Pancreas (tissue), 10 donors: ENCODE measurements at regions of chr3 and their contacts with region 1.

Region 1: DNA sequence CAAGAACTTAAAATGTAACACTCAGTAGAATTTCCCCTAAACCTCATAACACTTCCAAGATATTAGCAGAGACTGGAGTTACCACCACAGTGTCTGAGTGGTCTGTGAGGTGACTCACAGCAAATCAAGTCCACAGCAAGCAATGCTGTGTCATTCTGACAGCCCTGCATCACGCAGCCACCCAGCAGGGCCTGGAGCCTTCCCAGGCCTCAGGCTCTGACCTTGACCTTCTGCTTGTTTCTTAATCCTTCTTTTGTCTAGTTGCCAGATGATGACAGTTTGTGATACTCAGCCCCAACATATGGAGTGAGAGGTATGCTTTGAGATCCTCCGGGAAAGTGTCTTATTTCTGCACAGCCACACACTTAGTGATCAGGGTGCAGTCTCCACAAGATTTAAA is 82.5 kb downstream of the TOP2B start:
- DNase-seq: no peak
- ATAC-seq: no peak
- H3K4me3 ChIP-seq: no peak overlapping the region
- H3K27ac ChIP-seq: no peak overlapping the region
- H3K4me1 ChIP-seq: no peaks in the 10 kb centered on the region
- H3K27me3 ChIP-seq: no peaks in the 10 kb centered on the region
- CTCF ChIP-seq: no peak

Region 2: GRCh38 chr3:24763415-24763814 is 818.8 kb before region 1 on chr3:
- intact Hi-C with region 1: loop called in 1 of 3 experiments (anchors 10 kb)
- DNase-seq: no peak
- ATAC-seq: no peak
- H3K4me3 ChIP-seq: no peak overlapping the region
- H3K27ac ChIP-seq: no peak overlapping the region
- H3K4me1 ChIP-seq: no peaks in the 10 kb centered on the region
- H3K27me3 ChIP-seq: no peaks in the 10 kb centered on the region
- CTCF ChIP-seq: no peak

Region 3: GRCh38 chr3:24963762-24964625 is 618.2 kb before region 1 on chr3:
- intact Hi-C with region 1: loop called in 1 of 3 experiments (anchors 10 kb)
- DNase-seq: no peak
- ATAC-seq: no peak
- H3K4me3 ChIP-seq: no peak overlapping the region
- H3K27ac ChIP-seq: no peak overlapping the region
- H3K4me1 ChIP-seq: no peaks in the 10 kb centered on the region
- H3K27me3 ChIP-seq: no peaks in the 10 kb centered on the region
- CTCF ChIP-seq: peak in 3 of 4 donors; percentile 13 to 28 (median 27)